ENCODE measurements at regions of chr3 and their contacts with region 1.

Region 1: DNA sequence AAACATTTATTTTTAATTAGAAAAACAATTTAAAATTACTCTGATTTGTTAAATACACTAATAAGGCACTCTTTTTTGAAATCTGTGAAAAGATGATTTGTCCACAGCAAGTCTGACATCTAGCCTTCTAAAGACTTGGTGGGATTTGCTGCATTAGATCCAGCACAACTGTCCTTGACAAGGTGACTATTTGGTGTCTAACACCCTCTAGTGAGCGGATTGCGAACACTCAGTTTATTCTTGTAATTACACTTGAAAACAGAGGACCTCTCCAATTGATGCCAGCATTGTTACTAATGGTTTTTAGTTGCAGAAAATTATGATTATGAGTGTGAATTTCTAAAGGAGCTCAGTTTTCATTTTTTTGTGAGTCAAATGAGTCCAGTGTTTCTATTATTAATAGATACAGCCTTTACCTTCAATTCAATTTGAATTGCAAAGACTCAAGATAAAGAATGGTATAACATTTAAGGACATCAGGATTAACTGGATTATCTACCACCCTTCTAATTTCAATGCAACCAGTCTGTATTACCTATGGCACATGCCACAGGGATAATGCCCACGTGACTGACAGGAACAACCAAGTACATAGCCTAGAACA is 29.7 kb upstream of the STRIT1 start:
- DNase-seq: peak; percentile 47
- H3K4me3 Mint-ChIP-seq: no peak overlapping the region
- H3K27ac Mint-ChIP-seq: no peak overlapping the region
- H3K4me1 Mint-ChIP-seq: no peaks in the 10 kb centered on the region
- H3K27me3 Mint-ChIP-seq: no peaks in the 10 kb centered on the region

Region 2: GRCh38 chr3:154334973-154335420 is 988.2 kb before region 1 on chr3:
- CTCF ChIA-PET with region 1: no interaction called
- intact Hi-C with region 1: loop called (anchors 1 kb)
- DNase-seq: no peak
- H3K4me3 Mint-ChIP-seq: no peak overlapping the region
- H3K27ac Mint-ChIP-seq: no peak overlapping the region
- H3K4me1 Mint-ChIP-seq: no peaks in the 10 kb centered on the region
- H3K27me3 Mint-ChIP-seq: peaks cover 3% of the 10 kb centered on the region

Region 3: GRCh38 chr3:154758109-154758868 is 564.9 kb before region 1 on chr3:
- CTCF ChIA-PET with region 1: no interaction called
- intact Hi-C with region 1: loop called (anchors 1 kb)
- DNase-seq: no peak
- H3K4me3 Mint-ChIP-seq: no peak overlapping the region
- H3K27ac Mint-ChIP-seq: no peak overlapping the region
- H3K4me1 Mint-ChIP-seq: no peaks in the 10 kb centered on the region
- H3K27me3 Mint-ChIP-seq: no peaks in the 10 kb centered on the region

Region 4: DNA sequence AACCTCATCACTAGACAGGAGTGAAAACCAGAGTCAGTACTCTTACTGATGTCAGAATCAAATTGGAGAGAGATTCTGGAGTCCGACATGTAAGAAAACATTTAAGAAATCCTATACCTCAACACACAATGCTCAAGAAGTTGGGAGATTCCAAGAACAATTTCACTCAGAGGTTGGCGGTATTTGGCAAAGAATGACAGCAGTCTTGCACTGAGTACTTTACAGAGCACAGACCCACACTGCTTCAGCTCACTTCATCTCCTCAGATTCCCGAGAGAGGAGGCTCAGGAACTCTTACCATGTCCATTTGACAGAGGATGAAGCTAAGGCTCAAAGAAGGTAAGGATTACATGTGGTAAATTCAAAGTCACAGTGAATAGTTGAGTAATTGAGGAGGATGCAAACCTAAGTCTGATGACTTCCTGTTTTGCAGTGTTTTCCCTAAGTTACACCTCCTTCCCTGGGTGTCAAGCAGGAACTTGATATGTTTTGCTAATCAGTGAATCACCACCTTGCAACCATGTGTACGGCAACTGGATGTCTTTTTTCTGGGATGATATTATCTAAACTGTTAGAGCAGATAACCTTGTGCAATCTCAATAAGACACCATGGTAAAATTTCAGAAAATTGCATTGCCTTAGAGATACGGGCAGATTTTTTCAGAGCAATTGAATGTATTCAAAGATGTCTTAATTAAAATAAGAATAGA is 304.4 kb before region 1 on chr3:
- CTCF ChIA-PET with region 1: no interaction called
- intact Hi-C with region 1: no loop called
- DNase-seq: no peak
- H3K4me3 Mint-ChIP-seq: no peak overlapping the region
- H3K27ac Mint-ChIP-seq: no peak overlapping the region
- H3K4me1 Mint-ChIP-seq: no peaks in the 10 kb centered on the region
- H3K27me3 Mint-ChIP-seq: no peaks in the 10 kb centered on the region

Measured in activated naive CD4-positive, alpha-beta T cell treated with anti-CD3 and anti-CD28 coated beads for 36 hours (primary cell).